CD4-positive, alpha-beta memory T cell (primary cell): ENCODE measurements at regions of chr2 and their contacts with region 1.

Region 1: GRCh38 chr2:96536445-96537065 is at the start of gene ARID5A:
- DNase-seq: peak; percentile 85 to 93 (median 87)
- H3K4me3 ChIP-seq: peak within 1 kb of the TSS; percentile 81 to 97
- H3K4me3 Mint-ChIP-seq: peak within 1 kb of the TSS; percentile 91 to 98 (median 96)
- H3K27ac ChIP-seq: peak within 1 kb of the TSS; percentile 94
- H3K27ac Mint-ChIP-seq: peak within 1 kb of the TSS; percentile 96 to 100 (median 99)
- H3K4me1 ChIP-seq: peaks cover 52% of the 10 kb centered on the region
- H3K4me1 Mint-ChIP-seq: peaks cover 26 to 65% (median 41%) of the 10 kb centered on the region in 4 donors
- H3K27me3 ChIP-seq: no peaks in the 10 kb centered on the region
- H3K27me3 Mint-ChIP-seq: no peaks in the 10 kb centered on the region
- total RNA-seq, gene ARID5A: 80.0 to 83.8 TPM

Region 2: DNA sequence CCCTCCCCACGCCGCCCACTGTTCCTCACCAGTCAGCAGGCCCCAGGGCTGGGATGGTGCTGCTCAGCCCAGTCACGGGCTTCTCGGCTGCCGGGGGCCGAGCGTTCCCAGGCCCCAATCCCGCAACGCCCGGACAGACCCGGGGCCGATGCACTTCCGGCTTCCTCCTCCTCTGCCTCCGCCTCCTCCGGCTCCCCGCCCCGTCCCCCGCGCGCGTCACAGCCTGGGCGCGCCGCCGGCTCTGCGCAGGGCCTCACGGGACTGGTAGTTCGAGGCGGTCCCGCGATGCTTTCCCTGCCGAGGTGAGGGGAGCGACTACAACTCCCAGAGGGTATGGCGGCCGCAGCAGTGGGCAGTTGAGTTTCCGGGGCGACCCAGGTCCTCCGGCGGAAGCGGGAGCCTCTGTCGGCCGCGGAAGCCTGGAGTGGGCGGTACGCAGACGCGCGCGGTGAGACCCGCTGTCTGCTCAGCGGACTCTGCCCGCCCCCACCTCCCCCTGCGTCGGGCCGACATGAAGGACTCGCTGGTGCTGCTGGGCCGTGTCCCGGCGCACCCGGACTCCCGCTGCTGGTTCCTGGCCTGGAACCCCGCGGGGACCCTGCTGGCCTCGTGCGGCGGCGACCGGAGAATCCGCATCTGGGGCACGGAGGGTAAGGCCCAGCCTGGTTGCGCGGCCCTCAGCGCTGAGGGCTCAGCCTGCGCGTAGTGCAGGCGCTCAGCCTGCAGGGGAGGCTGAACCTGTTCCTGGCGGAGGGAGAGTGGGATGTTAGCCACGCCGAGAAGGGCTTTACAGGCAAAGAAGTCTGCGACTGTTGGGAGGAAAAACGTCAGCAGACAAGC is 270.5 kb before region 1 on chr2 and contains the starts of genes CIAO1 and TMEM127:
- CTCF ChIA-PET with region 1: no interaction called
- POLR2A ChIA-PET with region 1: interaction called, 3 read pairs
- intact Hi-C with region 1: loop called (anchors 1 kb)
- DNase-seq: peak; percentile 97 to 98 (median 97)
- H3K4me3 ChIP-seq: peak within 1 kb of the TSS; percentile 85 to 97
- H3K4me3 Mint-ChIP-seq: peak within 1 kb of the TSS; percentile 91 to 99 (median 94)
- H3K27ac ChIP-seq: peak within 1 kb of the TSS; percentile 94
- H3K27ac Mint-ChIP-seq: peak within 1 kb of the TSS; percentile 80 to 99 (median 94)
- H3K4me1 ChIP-seq: peaks cover 49% of the 10 kb centered on the region
- H3K4me1 Mint-ChIP-seq: peaks cover 22 to 64% (median 48%) of the 10 kb centered on the region in 4 donors
- H3K27me3 ChIP-seq: no peaks in the 10 kb centered on the region
- H3K27me3 Mint-ChIP-seq: no peaks in the 10 kb centered on the region
- total RNA-seq, gene CIAO1: 78.3 to 87.3 TPM
- total RNA-seq, gene TMEM127: 45.1 to 45.6 TPM

Region 3: GRCh38 chr2:96344011-96344410 is 192.5 kb before region 1 on chr2:
- CTCF ChIA-PET with region 1: interaction called, 3 read pairs
- POLR2A ChIA-PET with region 1: interaction called, 29 read pairs
- intact Hi-C with region 1: no loop called
- DNase-seq: peak; percentile 67 to 84 (median 72)
- H3K4me3 ChIP-seq: no peak overlapping the region
- H3K4me3 Mint-ChIP-seq: peak overlapping the region in 7 of 8 donors; percentile 15 to 81 (median 53)
- H3K27ac ChIP-seq: peak overlapping the region; percentile 68
- H3K27ac Mint-ChIP-seq: peak overlapping the region; percentile 82 to 96 (median 92)
- H3K4me1 ChIP-seq: peaks cover 55% of the 10 kb centered on the region
- H3K4me1 Mint-ChIP-seq: peaks cover 41 to 61% (median 47%) of the 10 kb centered on the region in 4 donors
- H3K27me3 ChIP-seq: no peaks in the 10 kb centered on the region
- H3K27me3 Mint-ChIP-seq: no peaks in the 10 kb centered on the region

Region 4: DNA sequence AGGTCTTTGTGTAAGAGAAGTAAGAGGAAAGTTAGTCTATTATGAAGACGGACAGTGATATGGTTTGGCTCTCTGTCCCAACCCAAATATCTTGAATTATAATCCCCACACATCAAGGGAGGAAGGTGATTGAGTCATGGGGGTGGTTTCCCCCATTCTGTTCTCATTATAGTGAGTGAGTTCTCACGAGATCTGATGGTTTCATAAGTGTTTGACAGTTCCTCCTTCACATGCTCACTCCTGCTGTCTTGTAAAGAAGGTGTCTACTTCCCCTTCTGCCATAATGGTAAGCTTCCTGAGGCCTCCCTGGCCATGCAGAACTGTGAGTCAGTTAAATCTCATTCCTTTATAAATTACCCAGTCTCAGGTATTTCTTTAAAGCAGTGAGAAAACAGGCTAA is 99.0 kb before region 1 on chr2:
- CTCF ChIA-PET with region 1: no interaction called
- POLR2A ChIA-PET with region 1: no interaction called
- intact Hi-C with region 1: no loop called
- DNase-seq: no peak
- H3K4me3 ChIP-seq: no peak overlapping the region
- H3K4me3 Mint-ChIP-seq: no peak overlapping the region
- H3K27ac ChIP-seq: no peak overlapping the region
- H3K27ac Mint-ChIP-seq: no peak overlapping the region
- H3K4me1 ChIP-seq: no peaks in the 10 kb centered on the region
- H3K4me1 Mint-ChIP-seq: no peaks in the 10 kb centered on the region
- H3K27me3 ChIP-seq: no peaks in the 10 kb centered on the region
- H3K27me3 Mint-ChIP-seq: peaks cover 0 to 5% of the 10 kb centered on the region in 2 donors

Region 5: DNA sequence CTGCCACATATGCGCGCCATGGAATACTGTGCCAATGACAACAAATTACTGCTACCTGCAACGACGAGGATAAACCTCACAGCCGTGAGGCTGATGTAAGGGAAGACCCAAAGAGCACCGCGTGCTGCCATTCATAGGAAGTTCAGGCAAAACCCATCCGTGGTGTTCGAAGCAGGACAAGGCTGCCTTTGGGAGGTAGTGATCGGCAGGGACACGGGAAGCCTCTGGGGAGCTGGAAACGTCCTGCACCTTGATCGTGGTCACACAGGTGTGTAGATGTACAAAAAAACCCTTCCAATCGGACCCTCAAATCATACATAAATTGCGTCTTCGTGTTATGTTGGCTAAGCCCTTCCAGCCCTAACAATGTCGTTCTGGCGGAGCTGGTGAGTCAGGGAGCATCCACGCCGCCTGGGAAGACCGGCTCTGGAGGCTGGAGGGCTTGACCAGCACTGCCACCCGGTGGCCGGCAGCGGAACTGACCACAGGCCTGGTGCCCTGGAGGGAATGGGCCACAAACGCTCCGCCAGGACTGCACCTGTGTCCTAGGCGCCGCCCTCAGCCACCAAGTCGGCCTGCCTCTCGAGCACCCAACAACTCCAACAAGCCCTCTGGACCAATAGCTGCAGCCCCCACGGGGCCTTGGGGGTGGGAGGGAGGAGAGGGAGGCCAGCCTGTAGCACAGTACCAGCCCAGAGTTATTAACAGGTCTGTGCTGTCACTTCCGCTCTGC is 27.3 kb before region 1 on chr2:
- CTCF ChIA-PET with region 1: interaction called, 6 read pairs
- POLR2A ChIA-PET with region 1: interaction called, 7 read pairs
- intact Hi-C with region 1: loop called (anchors 1 kb)
- DNase-seq: peak in 3 of 5 donors; percentile 21 to 45 (median 26)
- H3K4me3 ChIP-seq: no peak overlapping the region
- H3K4me3 Mint-ChIP-seq: peak overlapping the region in 4 of 8 donors; percentile 7 to 46 (median 20)
- H3K27ac ChIP-seq: no peak overlapping the region
- H3K27ac Mint-ChIP-seq: peak overlapping the region in 2 of 7 donors; percentile 9 to 66
- H3K4me1 ChIP-seq: peaks cover 10% of the 10 kb centered on the region
- H3K4me1 Mint-ChIP-seq: peaks cover 4 to 23% (median 13%) of the 10 kb centered on the region in 4 donors
- H3K27me3 ChIP-seq: no peaks in the 10 kb centered on the region
- H3K27me3 Mint-ChIP-seq: peaks cover 1 to 12% of the 10 kb centered on the region in 2 donors

Region 6: GRCh38 chr2:96638144-96639121 is 101.9 kb after region 1 on chr2 and contains the start of gene KANSL3:
- CTCF ChIA-PET with region 1: no interaction called
- POLR2A ChIA-PET with region 1: interaction called, 5 read pairs
- intact Hi-C with region 1: loop called (anchors 2 kb)
- DNase-seq: peak; percentile 86 to 93 (median 89)
- H3K4me3 ChIP-seq: peak within 1 kb of the TSS; percentile 79 to 92
- H3K4me3 Mint-ChIP-seq: peak within 1 kb of the TSS; percentile 94 to 100 (median 96)
- H3K27ac ChIP-seq: peak within 1 kb of the TSS; percentile 77
- H3K27ac Mint-ChIP-seq: peak within 1 kb of the TSS; percentile 95 to 99 (median 97)
- H3K4me1 ChIP-seq: peaks cover 39% of the 10 kb centered on the region
- H3K4me1 Mint-ChIP-seq: peaks cover 26 to 42% (median 35%) of the 10 kb centered on the region in 4 donors
- H3K27me3 ChIP-seq: no peaks in the 10 kb centered on the region
- H3K27me3 Mint-ChIP-seq: peaks cover 0 to 2% of the 10 kb centered on the region in 2 donors
- total RNA-seq, gene KANSL3: 63.3 to 69.7 TPM

Region 7: GRCh38 chr2:96856776-96857673 is 320.5 kb after region 1 on chr2:
- CTCF ChIA-PET with region 1: no interaction called
- POLR2A ChIA-PET with region 1: interaction called, 12 read pairs
- intact Hi-C with region 1: no loop called
- DNase-seq: peak in 3 of 5 donors; percentile 29 to 40 (median 38)
- H3K4me3 ChIP-seq: peak overlapping the region; percentile 20 to 70
- H3K4me3 Mint-ChIP-seq: peak overlapping the region; percentile 86 to 94 (median 90)
- H3K27ac ChIP-seq: peak overlapping the region; percentile 80
- H3K27ac Mint-ChIP-seq: peak overlapping the region; percentile 69 to 94 (median 86)
- H3K4me1 ChIP-seq: peaks cover 44% of the 10 kb centered on the region
- H3K4me1 Mint-ChIP-seq: peaks cover 22 to 63% (median 36%) of the 10 kb centered on the region in 4 donors
- H3K27me3 ChIP-seq: no peaks in the 10 kb centered on the region
- H3K27me3 Mint-ChIP-seq: no peaks in the 10 kb centered on the region